Head of caudate nucleus (tissue), 42 donors: ENCODE measurements at regions of chr7 and their contacts with region 1.

Region 1: GRCh38 chr7:103296901-103297836 is at the start of gene PMPCB:
- DNase-seq: peak; percentile 94 to 100 (median 98)

Region 2: GRCh38 chr7:103011650-103012049 is 285.5 kb before region 1 on chr7:
- intact Hi-C with region 1: no loop called
- DNase-seq: no peak

Region 3: DNA sequence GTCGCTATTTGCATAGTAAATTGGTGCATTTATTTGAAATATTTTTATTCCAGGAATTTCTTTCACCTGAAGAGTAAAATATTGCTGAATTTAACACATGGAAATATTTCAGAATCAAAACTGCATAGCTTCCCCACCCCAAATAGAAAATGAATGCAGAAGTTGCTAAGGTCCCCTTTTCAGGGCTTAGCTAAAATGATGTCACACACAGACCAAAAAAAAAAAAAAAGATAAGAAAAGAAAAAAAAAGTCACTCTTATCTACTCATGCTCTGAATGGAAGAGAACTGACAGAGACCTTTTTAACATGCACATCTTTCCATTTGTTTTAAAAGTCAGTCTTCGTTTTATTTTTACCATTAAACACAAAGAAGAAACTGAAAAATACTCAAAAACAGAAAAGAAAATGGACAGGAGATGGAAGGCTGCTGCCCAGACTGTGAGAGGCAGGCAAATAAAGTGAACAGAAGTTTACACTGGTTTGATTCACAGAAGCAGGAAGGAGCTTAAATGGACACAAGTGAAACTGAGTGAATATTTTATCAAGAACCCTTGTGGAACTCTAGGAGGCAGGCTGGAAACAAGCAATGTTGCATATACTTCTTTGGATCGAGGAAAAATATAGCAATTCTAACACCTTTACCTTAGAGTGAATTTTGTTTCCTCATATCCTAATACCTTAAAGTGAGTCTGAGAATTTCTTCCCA is 82.3 kb after region 1 on chr7:
- intact Hi-C with region 1: no loop called
- DNase-seq: no peak

Region 4: DNA sequence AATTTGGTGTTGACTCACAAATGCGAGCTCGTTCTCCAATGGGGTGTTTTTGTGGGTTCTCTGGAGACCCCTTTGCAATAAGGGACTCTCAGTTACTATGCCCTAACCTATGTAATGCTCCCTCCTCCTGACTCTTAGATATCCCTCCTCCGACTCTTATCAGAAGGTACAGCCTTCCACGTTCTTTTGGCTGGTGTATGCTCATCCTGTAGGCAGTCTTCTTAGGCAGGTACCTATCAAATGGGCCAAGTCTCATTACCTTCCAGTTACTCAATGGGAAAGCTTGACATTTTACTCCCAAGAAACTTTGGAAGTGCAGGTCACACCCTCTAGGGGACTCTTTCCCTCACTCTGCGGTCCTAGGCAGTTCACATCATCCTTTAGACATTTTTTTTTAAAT is 116.2 kb after region 1 on chr7:
- intact Hi-C with region 1: loop called (anchors 5 kb)
- DNase-seq: no peak